Naive thymus-derived CD4-positive, alpha-beta T cell (primary cell): ENCODE measurements at regions of chr2 and their contacts with region 1.

Region 1: DNA sequence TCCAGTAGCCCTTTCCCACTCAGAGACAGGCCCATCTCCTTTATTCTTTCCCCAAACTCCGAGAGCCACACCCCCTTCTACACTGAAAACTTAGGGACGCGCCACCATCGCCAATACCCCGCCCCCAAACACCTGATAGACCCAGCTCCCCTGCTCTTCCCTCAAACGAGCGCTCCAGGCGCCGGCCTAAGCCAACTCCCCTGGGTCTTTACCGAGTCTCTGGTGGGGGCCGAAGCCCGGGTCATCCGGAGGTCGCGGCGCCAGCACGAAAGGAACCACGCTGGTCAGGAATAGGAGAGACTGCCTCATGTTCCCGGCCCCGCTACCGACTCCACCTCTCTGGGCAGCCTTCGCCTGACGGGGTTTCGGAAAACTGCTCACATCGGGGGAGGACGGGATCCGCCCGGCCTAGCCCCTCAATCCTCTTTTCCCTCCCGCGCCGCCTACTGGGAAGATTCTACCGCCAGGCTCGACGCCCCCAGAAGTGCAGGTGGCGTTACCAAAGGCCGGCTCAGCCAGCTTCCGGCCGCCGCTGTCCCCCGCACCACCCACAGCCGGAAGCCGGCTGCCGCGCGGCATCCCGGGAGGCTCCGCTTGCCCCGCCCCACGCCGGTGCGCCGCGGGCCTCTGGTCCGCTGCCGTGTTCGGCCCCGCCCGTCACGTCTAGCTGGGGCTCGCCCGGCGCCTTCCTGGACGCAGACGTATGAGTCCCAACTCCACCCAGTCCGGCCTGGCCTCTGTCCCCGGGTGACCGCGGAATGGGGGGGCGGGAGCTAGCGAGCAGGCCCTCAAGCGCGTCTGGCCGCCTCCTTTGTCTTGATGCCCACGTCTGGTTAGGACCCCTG is at the start of gene ADAM17:
- DNase-seq: peak; percentile 72 to 95 (median 80)
- ATAC-seq: peak; percentile 96
- H3K4me3 ChIP-seq: peak within 1 kb of the TSS; percentile 95
- H3K4me3 Mint-ChIP-seq: peak within 1 kb of the TSS; percentile 90 to 99 (median 96)
- H3K27ac ChIP-seq: peak within 1 kb of the TSS; percentile 97
- H3K27ac Mint-ChIP-seq: peak within 1 kb of the TSS; percentile 66 to 98 (median 96)
- H3K4me1 ChIP-seq: peaks cover 14 to 32% of the 10 kb centered on the region in 2 donors
- H3K4me1 Mint-ChIP-seq: peaks cover 35 to 63% (median 53%) of the 10 kb centered on the region in 7 donors
- H3K27me3 ChIP-seq: no peaks in the 10 kb centered on the region
- H3K27me3 Mint-ChIP-seq: no peaks in the 10 kb centered on the region
- total RNA-seq, gene ADAM17: 22.9 to 45.2 (median 25.9) TPM

Region 2: GRCh38 chr2:9142551-9143263 is 412.8 kb before region 1 on chr2:
- CTCF ChIA-PET with region 1: no interaction called
- POLR2A ChIA-PET with region 1: no interaction called
- intact Hi-C with region 1: loop called in 1 of 2 experiments (anchors 2 kb)
- DNase-seq: peak; percentile 32 to 90 (median 69)
- ATAC-seq: peak; percentile 94
- H3K4me3 ChIP-seq: no peak overlapping the region
- H3K4me3 Mint-ChIP-seq: peak overlapping the region in 7 of 10 donors; percentile 12 to 57 (median 36)
- H3K27ac ChIP-seq: no peak overlapping the region
- H3K27ac Mint-ChIP-seq: no peak overlapping the region
- H3K4me1 ChIP-seq: no peaks in the 10 kb centered on the region
- H3K4me1 Mint-ChIP-seq: peaks cover 0 to 5% (median 0%) of the 10 kb centered on the region in 7 donors
- H3K27me3 ChIP-seq: no peaks in the 10 kb centered on the region
- H3K27me3 Mint-ChIP-seq: peaks cover 1 to 27% (median 14%) of the 10 kb centered on the region in 5 donors

Region 3: GRCh38 chr2:9565436-9566153 is 10.1 kb after region 1 on chr2:
- CTCF ChIA-PET with region 1: no interaction called
- POLR2A ChIA-PET with region 1: interaction called, 10 read pairs
- intact Hi-C with region 1: no loop called
- DNase-seq: no peak
- ATAC-seq: no peak
- H3K4me3 ChIP-seq: no peak overlapping the region
- H3K4me3 Mint-ChIP-seq: no peak overlapping the region
- H3K27ac ChIP-seq: no peak overlapping the region
- H3K27ac Mint-ChIP-seq: no peak overlapping the region
- H3K4me1 ChIP-seq: no peaks in the 10 kb centered on the region
- H3K4me1 Mint-ChIP-seq: peaks cover 0 to 6% (median 0%) of the 10 kb centered on the region in 7 donors
- H3K27me3 ChIP-seq: no peaks in the 10 kb centered on the region
- H3K27me3 Mint-ChIP-seq: no peaks in the 10 kb centered on the region

Region 4: GRCh38 chr2:9703085-9703641 is 147.6 kb after region 1 on chr2:
- CTCF ChIA-PET with region 1: no interaction called
- POLR2A ChIA-PET with region 1: no interaction called
- intact Hi-C with region 1: loop called in 1 of 2 experiments (anchors 1 kb)
- DNase-seq: peak in 8 of 9 donors; percentile 7 to 77 (median 44)
- ATAC-seq: peak; percentile 90
- H3K4me3 ChIP-seq: peak overlapping the region; percentile 16
- H3K4me3 Mint-ChIP-seq: peak overlapping the region in 2 of 10 donors; percentile 23 to 26
- H3K27ac ChIP-seq: no peak overlapping the region
- H3K27ac Mint-ChIP-seq: peak overlapping the region in 1 of 9 donors; percentile 78
- H3K4me1 ChIP-seq: peaks cover 7 to 31% of the 10 kb centered on the region in 2 donors
- H3K4me1 Mint-ChIP-seq: peaks cover 8 to 39% (median 13%) of the 10 kb centered on the region in 7 donors
- H3K27me3 ChIP-seq: no peaks in the 10 kb centered on the region
- H3K27me3 Mint-ChIP-seq: peaks cover 0 to 4% (median 0%) of the 10 kb centered on the region in 5 donors

Region 5: DNA sequence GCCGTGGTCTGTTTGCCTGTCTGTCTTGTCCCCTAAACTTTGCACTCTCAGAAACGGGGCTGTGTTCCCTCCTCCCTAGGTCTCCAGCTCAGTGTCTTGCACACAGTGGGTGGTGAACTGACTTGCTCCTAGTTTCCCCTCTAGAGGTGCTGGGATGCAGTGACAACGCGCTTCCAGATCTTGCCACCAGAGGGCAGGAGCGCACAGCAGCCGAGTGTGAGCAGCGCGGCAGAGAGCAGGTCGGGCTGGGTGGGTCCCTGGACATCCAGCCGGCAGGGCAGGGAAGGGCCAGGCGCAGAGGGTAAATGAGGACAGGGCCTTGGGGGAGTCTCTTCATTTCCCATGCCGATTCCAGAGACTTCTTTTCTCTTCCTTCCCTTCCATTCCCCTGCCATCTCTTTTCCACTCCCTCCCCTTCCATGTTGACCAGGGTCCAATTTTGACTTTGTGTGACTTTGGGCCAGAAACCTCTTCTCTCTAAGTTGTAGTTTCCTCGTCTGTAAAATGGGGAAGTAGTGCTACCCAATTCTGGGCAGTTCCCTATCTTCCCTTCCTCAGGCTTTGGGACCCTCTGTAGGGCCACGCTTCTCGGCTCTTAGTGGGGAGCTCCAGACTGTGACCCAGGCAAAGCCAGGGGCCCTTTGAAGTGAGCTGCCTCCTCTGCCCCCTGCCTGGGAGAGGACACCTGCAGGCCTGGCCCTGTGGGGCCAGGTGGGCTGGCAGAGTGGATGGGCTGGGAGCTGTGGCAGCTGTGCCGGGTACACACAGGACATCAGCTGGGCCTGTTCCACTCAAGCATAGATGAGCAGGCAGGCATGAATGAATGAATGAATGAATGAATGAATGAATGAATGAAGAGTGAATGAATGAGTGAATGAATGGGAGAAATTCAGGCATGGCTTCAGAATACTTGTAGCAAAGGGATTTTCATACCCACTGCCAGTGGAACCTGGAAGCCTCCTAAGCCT is 244.4 kb after region 1 on chr2:
- CTCF ChIA-PET with region 1: no interaction called
- POLR2A ChIA-PET with region 1: no interaction called
- intact Hi-C with region 1: loop called (anchors 5 kb)
- DNase-seq: peak; percentile 55 to 89 (median 76)
- ATAC-seq: peak; percentile 91
- H3K4me3 ChIP-seq: peak overlapping the region; percentile 10
- H3K4me3 Mint-ChIP-seq: peak overlapping the region; percentile 4 to 89 (median 60)
- H3K27ac ChIP-seq: no peak overlapping the region
- H3K27ac Mint-ChIP-seq: peak overlapping the region in 5 of 9 donors; percentile 7 to 85 (median 28)
- H3K4me1 ChIP-seq: peaks cover 9 to 12% of the 10 kb centered on the region in 2 donors
- H3K4me1 Mint-ChIP-seq: peaks cover 11 to 29% (median 14%) of the 10 kb centered on the region in 7 donors
- H3K27me3 ChIP-seq: no peaks in the 10 kb centered on the region
- H3K27me3 Mint-ChIP-seq: peaks cover 0 to 10% (median 0%) of the 10 kb centered on the region in 5 donors

Region 6: GRCh38 chr2:10043906-10044601 is 488.5 kb after region 1 on chr2:
- CTCF ChIA-PET with region 1: no interaction called
- POLR2A ChIA-PET with region 1: no interaction called
- intact Hi-C with region 1: loop called (anchors 1 to 5 kb)
- DNase-seq: peak; percentile 79 to 93 (median 89)
- ATAC-seq: peak; percentile 73
- H3K4me3 ChIP-seq: peak overlapping the region; percentile 48
- H3K4me3 Mint-ChIP-seq: peak overlapping the region; percentile 76 to 89 (median 84)
- H3K27ac ChIP-seq: peak overlapping the region; percentile 76
- H3K27ac Mint-ChIP-seq: peak overlapping the region; percentile 82 to 95 (median 88)
- H3K4me1 ChIP-seq: peaks cover 6% of the 10 kb centered on the region in 2 donors
- H3K4me1 Mint-ChIP-seq: peaks cover 14 to 35% (median 29%) of the 10 kb centered on the region in 7 donors
- H3K27me3 ChIP-seq: no peaks in the 10 kb centered on the region
- H3K27me3 Mint-ChIP-seq: peaks cover 0 to 31% (median 0%) of the 10 kb centered on the region in 5 donors